ENCODE measurements at regions of chr5 and their contacts with region 1.

Region 1: DNA sequence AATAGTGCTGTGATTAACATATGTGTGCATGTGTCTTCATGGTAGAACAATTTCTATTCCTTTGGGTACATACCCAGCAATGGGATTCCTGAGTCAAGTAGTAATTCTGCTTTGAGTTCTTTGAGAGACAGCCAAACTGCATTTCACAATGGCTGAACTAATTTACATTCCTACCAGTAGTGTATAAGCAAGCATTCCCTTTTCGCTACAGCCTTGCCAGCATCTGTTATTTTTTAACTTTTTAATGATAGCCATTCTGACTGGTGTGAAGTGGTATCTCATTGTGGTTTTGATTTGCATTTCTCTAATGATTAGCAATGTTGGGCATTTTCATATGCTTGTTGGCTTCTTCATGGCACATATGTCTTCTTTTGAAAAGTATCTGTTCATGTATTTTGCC is 308.5 kb downstream of the ARRDC3 start:
- ATAC-seq: peak in 3 of 8 experiments; percentile 17 to 81 (median 69)
- H3K4me3 ChIP-seq: no peak overlapping the region
- H3K27ac ChIP-seq: no peak overlapping the region
- H3K4me1 ChIP-seq: peaks cover 0 to 9% of the 10 kb centered on the region in 2 donors

Region 2: DNA sequence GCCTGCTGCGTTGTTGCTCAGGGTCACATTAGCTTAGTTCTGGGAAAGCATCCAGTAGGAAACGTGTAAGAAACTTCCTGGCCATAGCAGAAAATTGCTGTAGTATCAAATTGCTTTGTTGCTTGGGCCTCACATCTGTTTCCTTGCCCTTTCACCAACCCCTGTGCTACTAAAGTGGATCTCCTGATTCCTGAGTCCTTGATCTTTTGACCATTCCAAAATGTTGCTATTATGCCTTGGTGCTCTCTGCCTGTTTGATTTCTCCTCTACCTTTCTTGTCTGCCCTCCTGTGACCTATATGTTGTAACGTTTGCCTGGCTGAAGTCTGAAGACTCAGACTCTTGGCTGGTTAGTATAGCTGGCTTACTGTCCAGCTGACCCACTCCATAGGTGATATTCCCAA is 165.5 kb before region 1 on chr5:
- in situ Hi-C with region 1: no loop called
- ATAC-seq: peak in 1 of 8 experiments; percentile 46
- H3K4me3 ChIP-seq: no peak overlapping the region
- H3K27ac ChIP-seq: no peak overlapping the region
- H3K4me1 ChIP-seq: no peaks in the 10 kb centered on the region

Region 3: DNA sequence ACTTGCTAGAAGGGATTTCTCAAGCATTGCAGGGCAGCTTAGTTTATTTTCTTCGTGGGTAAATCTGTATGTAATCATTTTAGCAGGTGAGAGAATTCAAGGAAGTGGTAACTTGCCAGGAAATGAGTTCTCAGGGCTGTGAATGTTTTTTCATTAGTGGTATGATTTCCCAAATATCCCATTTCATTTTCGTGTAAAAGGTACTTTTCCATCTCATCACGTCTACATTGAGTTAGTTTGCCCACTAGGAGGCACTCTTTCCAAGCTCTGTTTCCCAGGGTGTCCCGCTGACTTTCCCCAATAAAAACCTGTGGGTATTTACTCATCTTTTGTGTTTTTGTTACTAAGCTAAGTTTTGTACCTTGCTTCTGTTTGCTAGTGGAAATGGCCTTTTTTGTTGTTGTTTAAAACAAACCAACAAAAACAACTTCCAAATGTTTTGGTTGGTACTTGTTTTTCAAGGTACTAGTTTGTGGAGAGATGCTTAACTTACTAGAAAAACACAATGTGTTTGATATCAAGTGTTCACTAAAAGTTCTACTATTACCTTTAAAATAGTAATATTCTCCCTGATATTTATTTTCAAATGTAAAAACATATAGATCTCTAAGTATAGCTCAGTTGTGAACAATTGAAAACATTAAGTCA is 142.4 kb before region 1 on chr5:
- in situ Hi-C with region 1: loop called in 1 of 9 experiments (anchors 25 kb)
- ATAC-seq: peak in 7 of 8 experiments; percentile 40 to 75 (median 59)
- H3K4me3 ChIP-seq: no peak overlapping the region
- H3K27ac ChIP-seq: no peak overlapping the region
- H3K4me1 ChIP-seq: peaks cover 0 to 3% of the 10 kb centered on the region in 2 donors

Region 4: DNA sequence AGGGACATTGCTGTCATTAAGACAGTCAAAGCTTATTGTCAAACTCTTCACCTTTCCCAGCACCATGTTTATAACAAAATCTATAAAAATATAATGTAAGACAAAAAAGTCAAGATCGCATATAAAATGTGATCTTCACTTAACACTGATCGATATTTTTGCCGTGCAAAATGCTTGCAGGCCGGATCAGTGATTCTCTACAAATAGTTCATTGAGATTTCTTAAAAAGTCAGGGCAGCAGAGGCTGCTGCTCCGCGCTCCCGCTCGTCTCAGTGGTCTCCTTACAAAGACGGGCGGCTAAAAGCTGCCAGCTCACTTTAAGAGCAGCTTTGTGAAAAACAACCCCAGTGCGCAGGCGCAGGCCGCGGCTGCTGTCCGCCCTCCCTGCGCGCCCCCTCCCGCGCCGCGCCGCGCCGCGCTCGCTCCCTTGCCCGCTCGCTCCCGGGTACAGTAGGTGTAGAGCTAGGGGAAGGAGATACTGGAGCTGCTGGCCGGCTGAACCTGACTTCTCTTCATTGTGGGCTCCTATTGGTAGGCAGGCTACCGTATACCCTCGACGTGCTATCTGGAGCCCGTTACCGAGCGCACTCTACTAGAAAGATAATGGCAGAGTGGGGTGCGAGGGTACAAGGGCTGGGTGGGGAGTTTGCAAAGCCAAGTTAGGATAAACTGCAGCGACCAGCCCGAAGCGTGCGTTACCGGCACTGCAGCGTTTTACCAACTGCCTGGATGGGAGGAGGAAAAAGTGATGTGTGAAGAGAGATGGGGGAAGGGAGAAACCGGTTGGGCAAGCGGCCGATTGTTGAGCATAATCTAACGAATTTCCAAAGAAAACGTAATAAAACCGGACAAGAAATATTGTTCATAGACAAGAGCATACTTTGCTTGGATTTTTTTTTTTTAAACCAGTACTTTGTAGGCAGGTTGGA is 308.7 kb after region 1 on chr5 and contains the start of gene ARRDC3:
- in situ Hi-C with region 1: loop called in 1 of 9 experiments (anchors 25 kb)
- ATAC-seq: peak; percentile 39 to 79 (median 75)
- H3K4me3 ChIP-seq: peak within 1 kb of the TSS; percentile 61 to 86 (median 75)
- H3K27ac ChIP-seq: peak within 1 kb of the TSS; percentile 92 to 95
- H3K4me1 ChIP-seq: no peaks in the 10 kb centered on the region
- total RNA-seq, gene ARRDC3: 31.5 to 316 (median 154) TPM